ENCODE measurements at regions of chr6 and their contacts with region 1.

Region 1: GRCh38 chr6:26342106-26343004 is 22.6 kb upstream of the BTN3A2 start:
- DNase-seq: no peak
- ATAC-seq: peak; percentile 85
- H3K4me3 ChIP-seq: peak overlapping the region; percentile 23
- H3K27ac ChIP-seq: 0 out of 2 replicates have a peak overlapping the region, but pooled peaks have one; percentile 10
- H3K4me1 ChIP-seq: peaks cover 15% of the 10 kb centered on the region
- H3K27me3 ChIP-seq: no peaks in the 10 kb centered on the region; a peak in 1 of 4 replicates
- CTCF ChIP-seq: no peak
- EP300 ChIP-seq: no peak
- POLR2A ChIP-seq: no peak
- RAD21 ChIP-seq: no peak

Region 2: DNA sequence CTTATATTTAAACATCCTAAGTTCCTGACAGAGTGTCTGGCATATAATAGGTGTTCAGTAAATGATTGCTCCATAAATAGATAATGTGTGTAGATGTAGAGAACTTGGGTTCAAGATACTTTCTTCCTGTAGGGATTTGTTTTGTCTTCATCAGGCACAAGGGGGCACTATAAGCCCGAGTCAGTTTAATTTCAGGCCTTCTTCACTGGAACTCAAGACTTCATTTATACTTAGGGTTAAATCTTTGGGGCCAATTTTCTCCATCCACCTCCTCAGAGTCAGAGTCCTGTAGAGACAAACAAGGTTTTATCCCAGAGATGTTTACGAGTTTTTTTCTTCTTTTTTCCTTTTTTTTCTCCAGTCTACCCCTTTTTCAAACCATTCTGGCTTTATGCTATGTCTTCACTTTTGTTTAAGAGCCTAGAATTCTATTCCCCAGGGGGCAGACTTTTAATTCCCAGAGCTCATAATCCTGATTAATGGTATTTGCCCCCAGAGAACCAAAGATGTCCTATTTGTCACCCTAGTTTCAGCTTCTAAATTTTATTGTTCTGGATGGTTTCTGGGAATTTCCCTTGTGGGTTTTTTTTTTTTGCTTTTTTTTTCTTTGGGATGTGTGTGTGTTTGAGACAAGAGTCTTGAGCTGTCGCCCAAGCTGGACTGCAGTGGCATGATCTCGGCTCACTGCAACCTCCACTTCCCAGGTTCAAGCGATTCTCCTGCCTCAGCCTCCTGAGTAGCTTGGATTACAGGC is 166.8 kb before region 1 on chr6:
- CTCF ChIA-PET with region 1: interaction called, 18 read pairs
- POLR2A ChIA-PET with region 1: no interaction called
- RAD21 ChIA-PET with region 1: interaction called, 3 read pairs
- SMC1A ChIA-PET with region 1: interaction called, 3 read pairs
- in situ Hi-C with region 1: no loop called
- intact Hi-C with region 1: no loop called
- DNase-seq: no peak
- ATAC-seq: peak; percentile 28
- H3K4me3 ChIP-seq: peak overlapping the region; percentile 9; the same call in 1 of the 2 replicates
- H3K27ac ChIP-seq: peak overlapping the region; percentile 27
- H3K4me1 ChIP-seq: peaks cover 27% of the 10 kb centered on the region
- H3K27me3 ChIP-seq: no peaks in the 10 kb centered on the region
- CTCF ChIP-seq: peak; percentile 56 to 77 (median 64); a peak in 5 of 6 replicates
- EP300 ChIP-seq: no peak
- POLR2A ChIP-seq: no peak
- RAD21 ChIP-seq: peak; percentile 91

Region 3: DNA sequence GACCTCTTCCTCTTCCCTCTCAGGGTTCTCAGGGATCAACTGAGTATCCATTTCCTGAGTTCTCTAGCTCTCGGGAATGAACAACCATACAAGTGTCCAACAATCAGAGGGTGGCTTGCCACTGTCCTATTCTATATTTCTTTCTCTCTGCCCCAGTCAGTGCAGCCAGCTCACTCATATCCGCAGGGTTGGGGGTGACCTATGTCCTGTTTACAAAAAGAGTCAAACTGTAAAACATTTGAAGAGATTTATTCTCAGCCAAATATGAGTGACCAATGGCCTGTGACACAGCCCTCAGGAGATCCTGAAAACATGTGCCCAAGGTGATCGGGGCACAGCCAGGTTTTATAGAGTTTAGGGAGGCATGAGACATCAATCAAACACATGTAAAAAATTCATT is 11.8 kb after region 1 on chr6:
- CTCF ChIA-PET with region 1: interaction called, 6 read pairs
- POLR2A ChIA-PET with region 1: interaction called, 3 read pairs
- RAD21 ChIA-PET with region 1: interaction called, 5 read pairs
- SMC1A ChIA-PET with region 1: interaction called, 13 read pairs
- in situ Hi-C with region 1: no loop called
- intact Hi-C with region 1: no loop called
- DNase-seq: no peak
- ATAC-seq: no peak
- H3K4me3 ChIP-seq: no peak overlapping the region
- H3K27ac ChIP-seq: no peak overlapping the region
- H3K4me1 ChIP-seq: peaks cover 10% of the 10 kb centered on the region
- H3K27me3 ChIP-seq: no peaks in the 10 kb centered on the region; a peak in 1 of 4 replicates
- CTCF ChIP-seq: no peak
- EP300 ChIP-seq: no peak
- POLR2A ChIP-seq: no peak
- RAD21 ChIP-seq: no peak

Region 4: GRCh38 chr6:26420688-26421171 is 78.4 kb after region 1 on chr6:
- CTCF ChIA-PET with region 1: interaction called, 4 read pairs
- POLR2A ChIA-PET with region 1: no interaction called
- RAD21 ChIA-PET with region 1: interaction called, 3 read pairs
- SMC1A ChIA-PET with region 1: interaction called, 3 read pairs
- in situ Hi-C with region 1: no loop called
- intact Hi-C with region 1: loop called (anchors 1 kb)
- DNase-seq: no peak
- ATAC-seq: peak; percentile 69
- H3K4me3 ChIP-seq: peak overlapping the region; percentile 69; the same call in 1 of the 2 replicates
- H3K27ac ChIP-seq: peak overlapping the region; percentile 26
- H3K4me1 ChIP-seq: peaks cover 4% of the 10 kb centered on the region; the same call in 1 of the 2 replicates
- H3K27me3 ChIP-seq: no peaks in the 10 kb centered on the region
- CTCF ChIP-seq: peak; percentile 45 to 61 (median 59)
- EP300 ChIP-seq: no peak
- POLR2A ChIP-seq: no peak
- RAD21 ChIP-seq: peak; percentile 37; the same call in 1 of the 2 replicates

Region 5: GRCh38 chr6:26568601-26569432 is 226.5 kb after region 1 on chr6:
- CTCF ChIA-PET with region 1: interaction called, 96 read pairs
- POLR2A ChIA-PET with region 1: interaction called, 9 read pairs
- RAD21 ChIA-PET with region 1: interaction called, 50 read pairs
- SMC1A ChIA-PET with region 1: interaction called, 25 read pairs
- in situ Hi-C with region 1: no loop called
- intact Hi-C with region 1: no loop called
- DNase-seq: peak; percentile 100
- ATAC-seq: peak; percentile 76
- H3K4me3 ChIP-seq: peak overlapping the region; percentile 81
- H3K27ac ChIP-seq: no peak overlapping the region
- H3K4me1 ChIP-seq: peaks cover 13% of the 10 kb centered on the region
- H3K27me3 ChIP-seq: no peaks in the 10 kb centered on the region
- CTCF ChIP-seq: peak; percentile 52 to 79 (median 52); a peak in 5 of 6 replicates
- EP300 ChIP-seq: peak in 1 of 2 experiments; percentile 48; a peak in 1 of 4 replicates
- POLR2A ChIP-seq: no peak
- RAD21 ChIP-seq: peak; percentile 55